ENCODE measurements at regions of chr15 and their contacts with region 1.

Region 1: DNA sequence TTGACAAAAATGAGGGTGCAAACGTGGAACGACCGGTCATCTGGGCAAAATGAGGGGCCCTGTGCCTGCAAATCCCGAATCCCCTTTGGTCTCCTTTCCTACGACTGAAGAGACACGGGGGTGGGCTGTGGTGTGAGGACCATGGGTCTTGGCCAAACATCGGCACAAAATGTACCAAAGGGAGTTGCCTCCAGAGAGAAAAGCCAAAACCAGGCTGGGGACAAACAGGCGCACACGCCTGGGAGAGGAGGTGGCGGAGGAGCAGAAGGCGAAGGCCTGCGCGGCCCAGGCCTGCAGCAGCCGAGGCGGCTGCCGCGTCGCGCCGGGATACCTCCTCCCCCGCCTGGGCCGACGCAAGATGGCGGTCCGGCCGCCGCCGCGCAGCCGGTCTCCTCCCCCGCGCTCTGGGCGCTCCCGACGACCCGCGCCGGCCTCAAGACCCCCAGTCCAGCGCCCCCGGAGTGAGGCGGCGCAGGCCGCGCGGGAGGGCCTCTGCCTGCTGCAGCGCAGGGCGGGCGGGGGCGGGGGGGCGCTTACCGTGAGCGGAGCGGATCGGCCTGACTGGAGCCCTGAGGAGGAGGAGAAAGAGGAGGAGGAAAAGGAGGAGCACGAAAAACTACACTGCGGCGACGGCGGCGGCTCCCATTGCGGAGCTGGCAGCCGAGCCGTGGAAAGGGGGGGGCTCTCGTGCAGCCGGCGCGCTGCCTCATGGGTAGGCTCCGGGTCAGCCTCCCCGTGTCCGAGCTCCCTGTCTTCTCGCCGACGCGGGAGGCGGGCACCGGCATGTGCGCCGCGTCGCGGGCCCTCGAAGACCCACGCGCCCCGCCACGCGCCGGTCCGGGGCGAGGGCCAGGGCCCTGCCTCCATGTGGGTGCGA is at the start of gene ZNF280D:
- DNase-seq: peak; percentile 95
- H3K4me3 ChIP-seq: peak within 1 kb of the TSS; percentile 77 to 82 (median 80)
- H3K27ac ChIP-seq: peak within 1 kb of the TSS; percentile 98 to 99 (median 98)
- H3K4me1 ChIP-seq: peaks cover 35 to 76% (median 71%) of the 10 kb centered on the region in 4 donors
- H3K27me3 ChIP-seq: no peaks in the 10 kb centered on the region
- CTCF ChIP-seq: no peak
- EP300 ChIP-seq: no peak
- POLR2A ChIP-seq: no peak
- total RNA-seq, gene ZNF280D: 44.9 to 73.9 (median 52.4) TPM

Region 2: DNA sequence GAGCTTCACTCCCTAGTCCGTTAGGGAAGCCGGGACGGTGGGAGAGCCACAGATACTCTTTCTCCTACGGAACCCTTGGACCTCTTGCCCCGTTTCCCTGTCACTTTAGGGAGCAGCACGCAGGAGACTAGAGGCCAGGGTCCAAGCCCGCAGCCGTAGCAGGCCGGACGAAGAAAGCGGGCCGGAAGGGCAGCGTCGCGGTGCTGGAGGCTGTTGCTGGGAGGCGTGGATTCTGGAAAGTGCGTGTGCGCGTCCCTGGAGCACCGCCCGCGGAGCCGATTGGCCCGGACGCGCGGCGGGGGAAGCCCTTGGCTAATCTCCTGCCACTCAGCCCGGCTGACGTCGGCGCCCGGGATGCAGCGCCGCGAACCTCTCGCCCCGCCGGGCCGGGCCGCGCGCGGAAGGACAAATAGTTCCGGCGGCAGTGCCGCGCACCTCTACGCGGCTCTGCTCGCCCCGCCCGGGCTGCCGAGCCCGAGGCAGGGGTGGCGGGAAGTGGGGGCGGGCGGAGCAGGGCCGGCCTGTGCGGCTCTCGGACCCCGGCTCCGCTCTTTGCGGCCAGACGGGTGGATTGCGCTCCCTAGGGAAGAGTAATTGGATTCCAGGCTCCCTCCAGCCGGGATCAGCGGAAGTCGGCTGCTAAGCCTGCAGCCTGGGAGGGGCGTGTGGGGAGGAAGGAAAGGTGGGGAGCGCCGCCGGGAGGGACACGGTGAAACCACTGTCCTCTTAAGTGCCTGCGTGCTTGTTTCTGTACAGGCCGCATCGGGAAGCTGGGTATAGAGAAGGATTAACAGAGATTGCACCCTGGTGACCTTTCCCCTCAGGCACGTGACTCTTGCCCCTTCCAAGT is 154.0 kb after region 1 on chr15:
- intact Hi-C with region 1: loop called (anchors 5 kb)
- DNase-seq: peak; percentile 95
- H3K4me3 ChIP-seq: peak overlapping the region; percentile 68 to 81 (median 74)
- H3K27ac ChIP-seq: peak overlapping the region; percentile 94 to 99 (median 96)
- H3K4me1 ChIP-seq: peaks cover 21 to 25% (median 22%) of the 10 kb centered on the region in 4 donors
- H3K27me3 ChIP-seq: no peaks in the 10 kb centered on the region
- CTCF ChIP-seq: no peak
- EP300 ChIP-seq: no peak
- POLR2A ChIP-seq: peak; percentile 49